ENCODE measurements at regions of chr5 and their contacts with region 1.

Region 1: GRCh38 chr5:36667812-36668211 is 61.4 kb downstream of the SLC1A3 start:
- DNase-seq: peak; percentile 62 to 79
- H3K4me3 ChIP-seq: no peak overlapping the region
- H3K4me3 Mint-ChIP-seq: peak overlapping the region; percentile 15
- H3K27ac Mint-ChIP-seq: peak overlapping the region; percentile 55
- H3K4me1 ChIP-seq: peaks cover 60% of the 10 kb centered on the region
- H3K4me1 Mint-ChIP-seq: peaks cover 33% of the 10 kb centered on the region
- H3K27me3 ChIP-seq: no peaks in the 10 kb centered on the region
- H3K27me3 Mint-ChIP-seq: no peaks in the 10 kb centered on the region
- CTCF ChIP-seq: no peak

Region 2: GRCh38 chr5:36646507-36647023 is 21.2 kb before region 1 on chr5:
- CTCF ChIA-PET with region 1: no interaction called
- POLR2A ChIA-PET with region 1: interaction called, 4 read pairs
- intact Hi-C with region 1: loop called (anchors 1 kb)
- DNase-seq: peak in 1 of 2 experiments; percentile 33
- H3K4me3 ChIP-seq: no peak overlapping the region
- H3K4me3 Mint-ChIP-seq: peak overlapping the region; percentile 53
- H3K27ac Mint-ChIP-seq: peak overlapping the region; percentile 81
- H3K4me1 ChIP-seq: peaks cover 91% of the 10 kb centered on the region
- H3K4me1 Mint-ChIP-seq: peaks cover 42% of the 10 kb centered on the region
- H3K27me3 ChIP-seq: no peaks in the 10 kb centered on the region
- H3K27me3 Mint-ChIP-seq: no peaks in the 10 kb centered on the region
- CTCF ChIP-seq: no peak

Region 3: DNA sequence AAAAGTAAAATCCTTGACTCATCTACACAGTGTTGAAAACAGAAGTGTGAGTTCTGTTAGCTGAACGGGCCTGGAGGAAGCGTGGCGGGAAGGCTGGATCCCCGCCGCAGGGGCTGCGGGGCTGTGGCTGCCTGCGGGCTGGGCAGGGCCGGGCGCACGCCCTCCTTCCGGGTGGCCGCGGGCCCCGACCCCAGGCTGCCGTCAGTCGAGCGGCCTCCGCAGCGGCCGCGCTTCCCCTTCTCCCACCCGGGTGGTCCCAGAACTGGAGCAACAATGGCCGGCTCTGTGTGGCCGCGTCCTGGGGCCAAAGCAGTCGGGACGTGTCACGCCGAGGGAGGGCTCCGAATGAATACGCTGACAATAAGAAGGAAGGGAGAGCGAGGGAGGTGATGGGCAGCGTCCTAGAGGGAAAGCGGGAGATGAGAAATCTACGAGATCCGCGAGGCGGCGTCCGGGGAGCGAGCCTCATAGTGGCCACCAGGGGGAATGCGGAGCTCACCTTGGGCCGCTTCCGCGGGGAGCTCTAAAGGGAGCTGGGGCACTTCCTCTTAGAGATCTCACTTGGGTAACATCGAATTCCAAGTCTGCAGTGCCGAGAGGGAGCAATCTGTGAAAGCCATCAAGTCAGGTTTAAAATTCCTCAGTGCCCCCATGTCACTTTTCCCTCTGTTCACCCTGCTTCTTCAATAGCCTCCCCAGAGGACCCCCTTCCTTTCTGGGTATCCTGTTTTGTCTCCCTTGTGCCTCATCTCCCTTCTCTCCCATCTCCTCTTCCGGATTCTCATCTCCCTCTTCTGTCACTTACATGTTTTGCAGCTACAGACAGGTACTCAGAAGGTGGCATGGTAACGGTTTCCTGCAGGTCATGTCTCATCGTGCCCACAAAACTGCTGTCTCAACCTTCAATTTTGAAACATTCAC is 22.5 kb after region 1 on chr5:
- CTCF ChIA-PET with region 1: interaction called, 4 read pairs
- POLR2A ChIA-PET with region 1: interaction called, 4 read pairs
- intact Hi-C with region 1: loop called (anchors 1 kb)
- DNase-seq: peak; percentile 90 to 91
- H3K4me3 ChIP-seq: peak overlapping the region; percentile 71
- H3K4me3 Mint-ChIP-seq: peak overlapping the region; percentile 75
- H3K27ac Mint-ChIP-seq: peak overlapping the region; percentile 28
- H3K4me1 ChIP-seq: peaks cover 14% of the 10 kb centered on the region; the same call in 1 of the 2 replicates
- H3K4me1 Mint-ChIP-seq: peaks cover 10% of the 10 kb centered on the region
- H3K27me3 ChIP-seq: no peaks in the 10 kb centered on the region
- H3K27me3 Mint-ChIP-seq: no peaks in the 10 kb centered on the region
- CTCF ChIP-seq: peak; percentile 80 to 91

Measured in Caco-2 (cell line).